Activated CD8-positive, alpha-beta T cell treated with anti-CD3 and anti-CD28 coated beads for 36 hours (primary cell): ENCODE measurements at regions of chr3 and their contacts with region 1.

Region 1: DNA sequence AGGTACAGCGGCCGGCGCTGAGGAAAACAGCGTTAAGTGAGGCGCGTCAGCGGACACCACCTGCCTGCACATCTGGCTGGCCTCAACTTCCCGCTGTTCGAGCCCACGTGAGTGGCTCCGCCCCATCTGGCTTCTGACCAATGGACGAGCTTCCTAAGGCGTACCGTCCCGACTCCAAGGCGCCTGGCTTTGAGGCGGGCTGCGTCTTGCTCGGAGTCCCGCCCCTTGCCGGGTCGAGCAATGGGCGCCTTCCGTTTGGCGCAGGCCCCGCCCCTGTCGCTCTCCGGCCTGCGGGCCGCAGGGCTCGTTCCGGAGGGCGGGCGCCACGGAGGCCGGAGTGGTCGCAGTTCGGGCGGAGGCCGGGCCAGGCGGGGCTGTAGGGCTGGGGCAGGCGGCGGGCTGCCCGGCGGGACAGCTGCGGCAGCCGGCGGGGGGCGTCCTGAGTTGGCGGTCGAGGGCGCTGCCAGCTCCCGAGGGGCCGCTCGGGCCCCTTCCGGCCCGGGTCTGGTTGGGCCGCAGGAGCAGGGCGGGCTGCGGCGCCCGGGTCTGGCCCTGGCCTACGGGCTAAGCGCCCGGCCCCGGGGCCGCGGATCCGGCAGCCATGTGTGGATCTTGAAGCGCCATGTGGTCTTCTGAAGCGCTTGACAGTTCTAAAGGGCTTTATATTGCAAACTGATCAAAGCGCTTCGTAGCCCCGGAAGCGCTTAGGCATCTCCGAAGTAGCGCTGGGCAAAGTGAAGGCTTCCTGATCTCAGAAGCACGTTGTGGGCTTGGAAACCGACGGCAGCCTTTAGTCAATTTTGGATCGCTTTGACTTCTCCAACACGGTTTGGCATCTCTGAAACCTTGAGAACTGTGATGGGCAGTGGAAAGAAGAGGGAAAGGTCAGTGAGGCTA is at the start of gene TATDN2:
- DNase-seq: peak; percentile 98
- ATAC-seq: peak; percentile 95
- H3K4me3 Mint-ChIP-seq: peak within 1 kb of the TSS; percentile 98
- H3K27ac Mint-ChIP-seq: peak within 1 kb of the TSS; percentile 98
- H3K4me1 Mint-ChIP-seq: peaks cover 50% of the 10 kb centered on the region
- H3K27me3 Mint-ChIP-seq: no peaks in the 10 kb centered on the region
- CTCF ChIP-seq: no peak
- total RNA-seq, gene TATDN2: 37.1 to 38.5 TPM

Region 2: DNA sequence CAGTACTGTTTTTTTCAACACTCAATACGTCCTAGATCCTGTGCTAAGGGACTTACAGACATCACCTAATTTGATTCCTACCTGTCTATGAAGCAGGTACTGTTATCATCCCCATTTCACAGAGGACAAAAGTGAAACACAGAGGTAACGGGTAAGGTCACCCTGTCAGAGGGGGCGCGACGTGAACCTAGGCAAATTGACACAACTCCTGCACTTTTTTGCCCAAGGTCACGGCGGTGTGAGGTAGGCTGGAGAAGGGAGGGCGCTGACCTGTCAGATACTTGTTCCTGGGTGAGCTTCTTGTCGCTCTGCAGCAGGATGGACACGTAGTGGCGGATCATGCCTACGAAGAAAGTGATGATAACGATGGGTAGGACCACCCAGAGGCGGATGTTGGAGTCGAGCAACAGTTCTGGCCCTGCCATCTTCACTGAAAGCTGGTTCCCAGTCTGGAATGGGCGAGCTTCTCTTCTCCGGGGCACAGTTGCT is 262.2 kb before region 1 on chr3:
- CTCF ChIA-PET with region 1: no interaction called
- POLR2A ChIA-PET with region 1: no interaction called
- intact Hi-C with region 1: loop called (anchors 10 kb)
- DNase-seq: no peak
- ATAC-seq: peak; percentile 56
- H3K4me3 Mint-ChIP-seq: peak overlapping the region; percentile 97
- H3K27ac Mint-ChIP-seq: peak overlapping the region; percentile 95
- H3K4me1 Mint-ChIP-seq: peaks cover 34% of the 10 kb centered on the region
- H3K27me3 Mint-ChIP-seq: no peaks in the 10 kb centered on the region
- CTCF ChIP-seq: no peak

Region 3: DNA sequence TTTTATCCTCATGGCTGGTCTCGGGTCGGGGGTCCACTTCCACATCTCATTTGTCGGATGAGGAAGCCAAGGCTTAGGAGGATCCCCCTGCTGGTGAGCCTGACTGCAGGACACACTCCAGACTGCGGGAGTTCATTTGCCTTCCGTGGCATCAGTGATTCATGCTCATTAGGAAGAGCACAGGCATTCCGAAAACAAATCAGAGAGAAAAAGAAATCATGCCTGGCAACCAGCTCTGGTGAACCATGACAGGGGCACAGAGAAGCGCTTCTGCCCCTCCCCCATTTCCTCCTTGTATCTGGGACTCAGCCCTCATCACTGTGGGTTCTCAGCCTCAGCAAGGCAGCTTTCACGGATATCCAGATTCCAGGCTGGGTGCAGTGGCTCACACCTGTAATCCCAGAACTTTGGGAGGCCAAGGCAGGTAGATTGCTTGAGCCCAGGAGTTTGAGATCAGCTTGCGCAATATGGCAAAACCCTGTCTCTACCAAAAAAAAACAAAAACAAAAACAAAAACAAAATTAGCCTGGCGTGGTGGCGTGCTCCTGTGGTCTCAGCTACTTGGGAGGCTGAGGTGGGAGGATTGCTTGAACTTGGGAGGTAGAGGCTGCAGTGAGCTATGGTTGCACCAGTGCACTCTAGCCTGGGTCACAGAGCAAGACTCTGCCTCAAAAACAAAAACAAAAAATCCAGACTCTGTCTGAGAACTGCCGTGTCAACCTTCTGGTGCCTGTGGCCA is 55.3 kb before region 1 on chr3:
- CTCF ChIA-PET with region 1: interaction called, 9 read pairs
- POLR2A ChIA-PET with region 1: interaction called, 16 read pairs
- intact Hi-C with region 1: no loop called
- DNase-seq: peak; percentile 83
- ATAC-seq: peak; percentile 29
- H3K4me3 Mint-ChIP-seq: peak overlapping the region; percentile 55
- H3K27ac Mint-ChIP-seq: peak overlapping the region; percentile 98
- H3K4me1 Mint-ChIP-seq: peaks cover 83% of the 10 kb centered on the region
- H3K27me3 Mint-ChIP-seq: no peaks in the 10 kb centered on the region
- CTCF ChIP-seq: peak; percentile 32

Region 4: DNA sequence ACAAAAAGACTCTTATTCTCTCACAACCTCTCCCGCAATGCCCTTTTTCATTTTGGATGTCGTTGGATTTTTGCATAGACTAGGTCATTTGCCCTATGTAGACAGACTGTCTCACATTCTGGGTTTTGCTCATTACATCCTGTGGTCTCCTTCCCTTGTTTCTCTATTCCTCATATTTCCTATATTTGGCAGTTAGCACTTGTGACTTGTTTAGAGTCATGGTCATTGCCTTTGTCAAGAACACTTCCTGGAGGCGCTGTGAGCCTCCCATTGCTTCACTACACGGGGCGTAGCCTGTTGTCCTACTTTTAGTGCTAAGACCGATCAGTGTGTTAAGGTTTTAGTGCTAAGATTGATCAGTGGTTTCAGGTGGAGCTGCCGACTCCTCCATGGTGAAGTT is 16.3 kb before region 1 on chr3:
- CTCF ChIA-PET with region 1: no interaction called
- POLR2A ChIA-PET with region 1: interaction called, 11 read pairs
- intact Hi-C with region 1: no loop called
- DNase-seq: no peak
- ATAC-seq: no peak
- H3K4me3 Mint-ChIP-seq: no peak overlapping the region
- H3K27ac Mint-ChIP-seq: no peak overlapping the region
- H3K4me1 Mint-ChIP-seq: peaks cover 23% of the 10 kb centered on the region
- H3K27me3 Mint-ChIP-seq: no peaks in the 10 kb centered on the region
- CTCF ChIP-seq: no peak

Region 5: DNA sequence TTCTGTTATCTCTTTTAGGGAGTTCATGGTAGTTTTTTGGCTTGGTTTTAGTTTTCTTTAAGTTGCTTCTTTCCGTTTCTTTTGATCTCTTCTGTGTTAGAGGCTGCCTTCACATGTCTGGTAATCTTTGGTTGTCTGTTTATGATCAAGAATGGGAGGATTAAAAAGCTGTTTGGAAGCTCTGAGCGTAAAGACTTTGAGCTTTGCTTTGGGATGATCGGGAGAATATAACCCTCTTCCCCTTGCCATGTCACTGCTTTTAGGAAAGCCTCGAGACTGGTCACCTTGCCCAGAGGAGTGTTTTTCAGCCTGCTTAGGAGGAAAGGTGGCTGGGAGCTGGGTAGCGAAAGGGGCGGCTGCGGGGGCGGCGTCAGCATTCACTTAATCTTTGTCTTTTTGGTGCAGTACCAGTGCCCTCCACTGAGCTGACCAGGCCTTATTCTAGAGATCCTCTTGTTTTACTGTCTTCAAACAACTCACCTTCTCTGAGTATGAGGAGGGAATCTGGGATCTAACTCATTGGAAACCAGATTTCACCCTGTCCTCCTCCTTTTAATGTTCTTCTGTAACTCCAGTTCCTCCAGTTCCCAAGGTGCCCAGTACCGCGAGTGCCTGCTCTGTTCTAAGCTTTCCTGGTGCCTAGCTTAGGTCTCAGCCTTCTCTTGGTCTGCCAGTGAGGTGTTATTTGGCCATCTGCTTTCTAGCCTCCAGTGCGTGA is 15.4 kb after region 1 on chr3:
- CTCF ChIA-PET with region 1: interaction called, 27 read pairs
- POLR2A ChIA-PET with region 1: interaction called, 12 read pairs
- intact Hi-C with region 1: no loop called
- DNase-seq: peak; percentile 90
- ATAC-seq: peak; percentile 98
- H3K4me3 Mint-ChIP-seq: peak overlapping the region; percentile 59
- H3K27ac Mint-ChIP-seq: peak overlapping the region; percentile 90
- H3K4me1 Mint-ChIP-seq: peaks cover 70% of the 10 kb centered on the region
- H3K27me3 Mint-ChIP-seq: no peaks in the 10 kb centered on the region
- CTCF ChIP-seq: peak; percentile 74